Esophagus muscularis mucosa (tissue), 4 donors: ENCODE measurements at regions of chr14 and their contacts with region 1.

Region 1: DNA sequence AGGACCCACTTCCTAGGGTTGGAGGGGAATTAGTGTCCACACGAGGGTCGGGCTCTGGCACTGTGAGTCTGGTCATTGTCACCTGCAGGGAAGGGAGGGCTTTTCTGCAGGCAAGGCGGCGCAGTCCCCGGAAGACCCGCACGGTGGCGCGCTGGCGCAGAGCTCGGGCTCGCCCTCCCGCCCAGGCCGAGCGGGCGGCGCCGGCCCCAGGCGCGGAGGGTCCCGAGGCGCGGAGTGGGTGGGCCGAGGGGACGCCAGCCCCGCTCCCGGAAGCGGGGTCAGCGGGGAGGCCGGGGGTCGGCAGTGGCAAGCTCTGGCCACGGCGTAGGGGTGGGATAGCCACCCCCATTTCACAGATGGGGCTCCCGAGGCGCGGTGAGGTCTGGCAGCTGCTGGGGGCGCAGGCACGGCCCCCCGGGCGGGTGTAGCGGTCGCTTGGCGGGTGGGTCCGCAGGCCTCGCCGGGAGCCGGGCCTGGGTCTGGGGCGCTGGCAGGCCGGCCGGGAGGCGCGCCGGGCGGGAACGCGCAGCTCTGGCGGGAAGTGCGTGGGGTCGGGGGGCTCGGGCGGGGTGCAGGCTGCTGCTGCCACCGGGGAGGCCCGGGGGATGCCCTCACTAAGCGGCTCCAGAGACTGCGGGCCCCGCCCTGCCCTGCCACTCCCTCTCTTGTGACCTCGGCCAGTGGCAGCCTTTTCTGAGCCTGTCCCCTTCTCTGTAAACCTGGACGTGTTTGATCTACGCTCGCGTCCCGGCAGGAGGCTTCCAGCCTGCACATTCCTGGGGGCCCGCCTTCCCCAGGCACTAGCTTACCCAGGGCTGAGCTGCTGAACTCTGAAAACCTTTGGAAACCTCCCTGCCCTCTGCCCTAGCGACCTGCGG is 46.1 kb downstream of the CYP46A1 start:
- DNase-seq: no peak
- H3K4me3 ChIP-seq: peak overlapping the region; percentile 63 to 76 (median 70)
- H3K27ac ChIP-seq: peak overlapping the region; percentile 47 to 68 (median 62)
- H3K4me1 ChIP-seq: peaks cover 47 to 58% (median 54%) of the 10 kb centered on the region in 4 donors
- H3K27me3 ChIP-seq: no peaks in the 10 kb centered on the region
- CTCF ChIP-seq: peak; percentile 93 to 100 (median 95)
- EP300 ChIP-seq: no peak
- POLR2A ChIP-seq: no peak

Region 2: DNA sequence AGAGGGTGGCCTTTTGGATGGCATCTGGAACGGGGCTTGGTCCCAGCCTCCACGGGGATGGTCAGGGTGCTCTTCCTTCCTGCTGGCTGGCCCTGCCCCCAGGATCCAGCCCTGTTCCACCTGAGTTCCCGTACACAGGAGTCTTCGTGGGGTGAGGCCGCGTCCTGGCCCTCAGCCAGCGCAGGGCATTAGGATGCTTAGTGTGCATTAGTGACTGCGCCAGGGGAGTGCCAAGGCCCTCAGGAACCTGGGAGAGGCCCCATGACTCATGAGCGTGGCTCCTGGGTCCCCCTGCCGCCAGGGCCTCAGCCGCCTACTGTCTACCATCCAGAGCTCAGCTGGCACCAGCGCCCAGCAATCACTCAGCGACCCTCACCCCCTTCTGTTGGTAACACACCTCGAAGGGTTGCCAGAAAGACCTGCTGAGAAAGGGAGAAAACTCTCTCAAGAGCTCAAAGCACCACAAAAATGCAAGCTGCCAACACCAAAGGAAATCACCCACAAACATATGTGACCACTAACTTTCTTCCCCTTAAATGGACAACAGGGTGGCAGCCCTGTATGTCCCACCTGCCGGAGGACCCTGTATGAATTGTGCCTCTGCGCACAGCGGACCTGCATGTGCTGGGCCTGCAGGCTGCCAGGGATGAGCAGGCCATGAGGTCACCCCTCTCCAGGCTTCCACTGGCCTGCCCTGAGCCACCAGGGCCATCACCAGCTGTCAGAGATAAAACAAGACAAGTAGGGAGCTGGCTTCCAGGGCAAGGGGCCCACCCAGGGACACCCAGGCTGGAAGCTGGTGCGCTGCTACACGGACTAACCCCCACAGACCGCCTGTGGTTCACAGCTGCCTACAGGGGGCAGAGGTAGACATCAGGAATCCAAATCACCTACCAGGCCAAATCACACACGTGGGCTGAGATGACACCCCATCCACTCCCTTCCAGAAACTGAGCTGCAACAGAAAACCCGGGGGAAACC is 154.9 kb before region 1 on chr14:
- intact Hi-C with region 1: no loop called
- DNase-seq: no peak
- H3K4me3 ChIP-seq: no peak overlapping the region
- H3K27ac ChIP-seq: peak overlapping the region; percentile 88 to 90 (median 90)
- H3K4me1 ChIP-seq: peaks cover 96 to 100% (median 99%) of the 10 kb centered on the region in 4 donors
- H3K27me3 ChIP-seq: no peaks in the 10 kb centered on the region
- CTCF ChIP-seq: peak in 2 of 3 experiments; percentile 22 to 34
- EP300 ChIP-seq: no peak
- POLR2A ChIP-seq: no peak

Region 3: DNA sequence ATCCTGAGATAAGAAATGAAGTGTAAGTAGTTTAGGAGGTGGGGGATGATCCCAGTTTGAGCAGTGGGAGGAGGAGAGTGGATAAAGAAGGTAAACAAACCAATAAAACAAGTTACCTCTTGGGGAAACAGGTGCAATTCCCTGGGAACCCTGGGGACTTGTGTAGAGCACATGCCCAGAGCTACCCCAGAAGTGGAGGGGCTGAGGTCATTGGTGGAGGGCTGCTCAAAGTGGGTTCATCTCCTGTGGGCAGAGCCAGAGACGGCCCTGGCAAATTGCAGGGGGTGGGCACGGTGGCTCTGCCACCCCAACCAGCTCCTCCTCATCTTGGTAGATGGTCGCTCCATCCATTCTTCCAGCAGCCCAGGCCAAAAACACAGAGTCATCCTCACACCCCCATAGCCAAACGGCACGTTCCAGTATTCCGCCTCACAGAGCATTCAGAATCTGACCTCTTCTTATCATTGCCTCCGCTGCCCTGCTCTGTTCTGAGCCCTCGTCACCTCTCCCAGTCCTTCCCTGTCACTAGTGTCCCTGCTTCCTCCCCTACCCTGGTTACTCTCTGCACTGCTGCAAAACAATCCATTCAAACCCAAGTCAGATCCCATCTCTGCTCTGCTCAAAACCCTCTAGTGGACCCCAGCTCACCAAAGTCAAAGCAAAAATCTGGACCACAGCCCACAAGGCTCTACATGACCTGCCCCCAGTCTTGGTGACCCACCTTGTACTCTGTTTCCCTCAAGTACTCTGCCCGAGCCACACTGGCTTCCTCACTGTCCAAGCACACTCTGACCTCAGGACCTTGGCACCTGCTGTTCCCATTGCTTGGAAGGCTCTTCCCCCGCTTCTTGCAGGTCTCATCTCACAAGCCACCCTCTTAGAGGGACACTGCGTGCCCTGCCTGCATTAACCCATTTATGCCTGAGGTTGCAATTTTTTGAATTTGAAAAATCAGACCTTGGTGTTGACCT is 40.7 kb before region 1 on chr14:
- intact Hi-C with region 1: loop called (anchors 2 kb)
- DNase-seq: no peak
- H3K4me3 ChIP-seq: no peak overlapping the region
- H3K27ac ChIP-seq: no peak overlapping the region
- H3K4me1 ChIP-seq: peaks cover 2 to 8% (median 5%) of the 10 kb centered on the region in 4 donors
- H3K27me3 ChIP-seq: no peaks in the 10 kb centered on the region
- CTCF ChIP-seq: no peak
- EP300 ChIP-seq: no peak
- POLR2A ChIP-seq: no peak

Region 4: DNA sequence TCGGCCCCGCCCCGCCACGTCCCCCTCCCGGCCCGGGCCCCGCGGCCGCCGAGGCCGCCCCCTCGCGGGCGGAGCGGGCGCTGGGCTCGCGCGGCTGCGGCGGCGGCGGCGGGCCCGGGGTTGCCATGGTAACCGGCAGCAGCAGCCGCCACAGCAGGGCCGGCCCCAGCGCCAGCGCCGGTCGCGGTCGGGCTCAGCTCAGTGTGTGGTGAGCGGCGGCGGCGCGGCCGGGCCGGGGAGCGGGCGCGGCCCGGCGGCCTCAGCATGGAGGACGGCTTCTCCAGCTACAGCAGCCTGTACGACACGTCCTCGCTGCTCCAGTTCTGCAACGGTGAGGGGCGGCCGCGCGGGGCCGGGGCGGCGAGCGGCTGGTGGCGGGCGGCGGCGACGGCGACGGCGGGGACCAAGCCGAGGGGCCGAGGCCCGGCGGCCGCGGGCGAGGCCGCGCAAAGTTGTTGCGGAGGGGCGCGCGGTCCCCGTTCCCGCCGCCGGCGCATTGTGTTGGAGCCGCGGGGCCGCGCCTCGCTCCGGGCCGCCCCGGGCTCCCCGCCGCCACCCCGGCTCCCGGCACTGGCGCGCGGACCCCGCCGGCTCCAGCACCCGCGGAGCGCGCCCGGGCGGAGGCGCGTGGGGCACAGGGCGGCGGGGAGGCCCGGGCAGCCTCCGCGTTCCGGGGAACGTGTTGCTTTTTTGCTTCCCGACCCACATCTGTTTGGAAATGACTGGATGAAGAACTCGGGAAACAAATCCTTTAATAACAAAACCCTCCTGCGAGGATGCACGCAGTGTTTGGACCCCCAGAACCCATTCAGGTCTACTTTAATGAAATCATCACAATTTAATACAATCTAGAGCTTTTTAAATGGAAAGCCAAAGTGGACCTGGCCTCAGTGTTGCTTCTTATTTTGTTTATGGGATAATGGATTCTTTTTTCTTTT is 63.3 kb after region 1 on chr14 and contains the start of gene EML1:
- intact Hi-C with region 1: loop called (anchors 2 kb)
- DNase-seq: no peak
- H3K4me3 ChIP-seq: peak within 1 kb of the TSS; percentile 61 to 74 (median 66)
- H3K27ac ChIP-seq: peak within 1 kb of the TSS; percentile 91 to 94 (median 93)
- H3K4me1 ChIP-seq: peaks cover 25 to 69% (median 65%) of the 10 kb centered on the region in 4 donors
- H3K27me3 ChIP-seq: no peaks in the 10 kb centered on the region
- CTCF ChIP-seq: peak in 2 of 3 experiments; percentile 14 to 17
- EP300 ChIP-seq: no peak
- POLR2A ChIP-seq: no peak
- total RNA-seq, gene EML1: 92.3 to 131 (median 119) TPM

Region 5: DNA sequence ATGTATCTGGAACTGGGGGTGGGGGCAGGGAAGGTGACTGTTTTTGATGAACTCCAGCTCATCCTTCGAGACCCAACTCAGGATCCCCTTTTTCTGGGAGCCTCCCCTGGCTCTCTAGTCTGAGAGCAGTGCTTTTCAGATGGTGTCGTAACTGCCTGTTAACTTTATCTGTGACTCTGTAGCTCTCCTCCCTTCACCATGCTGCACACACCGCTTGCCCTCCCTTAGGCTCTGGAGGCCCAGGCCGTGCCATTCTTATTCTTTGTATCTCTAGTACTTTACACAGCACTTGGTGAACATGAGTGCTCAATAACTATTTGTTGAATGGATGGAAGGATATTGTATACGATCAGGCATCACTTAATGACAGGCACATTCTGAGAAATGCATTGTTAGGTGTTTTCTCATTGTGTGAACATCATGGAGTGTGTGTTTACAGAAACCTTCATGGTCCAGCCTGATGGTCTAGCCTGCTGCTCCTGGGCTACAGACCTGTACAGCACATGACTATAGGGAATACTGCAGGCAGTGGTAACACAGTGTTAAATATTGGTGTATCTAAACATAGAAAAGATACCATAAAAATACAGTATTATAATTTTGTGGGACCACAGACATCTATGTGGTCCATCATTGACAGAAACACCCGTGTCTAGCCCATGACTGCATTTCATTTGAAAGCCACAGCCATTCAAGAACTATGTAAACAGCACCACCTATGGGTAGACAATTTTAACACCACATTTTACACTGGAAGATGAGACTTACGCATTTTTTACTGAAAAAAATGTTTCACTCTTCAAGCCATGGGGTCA is 154.8 kb after region 1 on chr14:
- intact Hi-C with region 1: loop called (anchors 2 kb)
- DNase-seq: no peak
- H3K4me3 ChIP-seq: no peak overlapping the region
- H3K27ac ChIP-seq: no peak overlapping the region
- H3K4me1 ChIP-seq: peaks cover 5 to 12% (median 9%) of the 10 kb centered on the region in 4 donors
- H3K27me3 ChIP-seq: no peaks in the 10 kb centered on the region
- CTCF ChIP-seq: peak; percentile 74 to 81 (median 79)
- EP300 ChIP-seq: no peak
- POLR2A ChIP-seq: no peak